PC-3 (cell line): ENCODE measurements at regions of chr20 and their contacts with region 1.

Region 1: GRCh38 chr20:45044084-45044573 is 56.8 kb downstream of the KCNS1 start:
- DNase-seq: peak; percentile 90
- ATAC-seq: peak; percentile 79
- H3K4me3 ChIP-seq: no peak overlapping the region
- H3K27ac ChIP-seq: no peak overlapping the region
- H3K4me1 ChIP-seq: peaks cover 26% of the 10 kb centered on the region
- H3K27me3 ChIP-seq: no peaks in the 10 kb centered on the region
- CTCF ChIP-seq: peak; percentile 97

Region 2: DNA sequence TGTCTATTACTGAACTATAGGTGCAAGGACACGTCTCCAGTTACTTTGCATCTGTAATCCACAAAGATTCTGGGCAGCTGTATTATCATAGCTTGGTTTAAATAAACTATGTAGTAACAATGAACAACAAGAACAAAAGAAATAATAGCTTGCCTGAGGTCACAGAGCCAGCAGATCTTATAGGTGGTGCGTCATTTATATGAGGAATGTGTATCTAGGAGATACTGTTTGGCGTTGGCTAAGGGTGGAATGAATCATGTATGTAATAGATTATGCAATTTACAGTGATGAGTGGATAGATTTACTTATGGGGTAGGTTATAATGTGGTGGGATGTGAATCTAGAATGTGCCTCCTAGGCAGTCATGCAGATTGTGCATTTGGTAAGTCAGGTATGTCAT is 645.8 kb before region 1 on chr20:
- CTCF ChIA-PET with region 1: no interaction called
- POLR2A ChIA-PET with region 1: no interaction called
- intact Hi-C with region 1: no loop called
- DNase-seq: peak; percentile 93
- ATAC-seq: peak; percentile 94
- H3K4me3 ChIP-seq: no peak overlapping the region
- H3K27ac ChIP-seq: peak overlapping the region; percentile 33
- H3K4me1 ChIP-seq: peaks cover 12% of the 10 kb centered on the region
- H3K27me3 ChIP-seq: no peaks in the 10 kb centered on the region
- CTCF ChIP-seq: no peak

Region 3: GRCh38 chr20:44960103-44960852 is 83.9 kb before region 1 on chr20 and contains the start of gene TOMM34:
- CTCF ChIA-PET with region 1: no interaction called
- POLR2A ChIA-PET with region 1: no interaction called
- intact Hi-C with region 1: no loop called
- DNase-seq: peak; percentile 97
- ATAC-seq: peak; percentile 83
- H3K4me3 ChIP-seq: peak within 1 kb of the TSS; percentile 79
- H3K27ac ChIP-seq: peak within 1 kb of the TSS; percentile 89
- H3K4me1 ChIP-seq: peaks cover 47% of the 10 kb centered on the region
- H3K27me3 ChIP-seq: no peaks in the 10 kb centered on the region
- CTCF ChIP-seq: no peak
- total RNA-seq, gene TOMM34: 103 and 120 TPM in 2 replicates

Region 4: GRCh38 chr20:45011108-45011526 is 33.0 kb before region 1 on chr20:
- CTCF ChIA-PET with region 1: interaction called, 16 read pairs
- POLR2A ChIA-PET with region 1: no interaction called
- intact Hi-C with region 1: loop called (anchors 2 kb)
- DNase-seq: peak; percentile 84
- ATAC-seq: peak; percentile 88
- H3K4me3 ChIP-seq: no peak overlapping the region
- H3K27ac ChIP-seq: peak overlapping the region; percentile 48
- H3K4me1 ChIP-seq: peaks cover 24% of the 10 kb centered on the region
- H3K27me3 ChIP-seq: no peaks in the 10 kb centered on the region
- CTCF ChIP-seq: peak; percentile 98

Region 5: DNA sequence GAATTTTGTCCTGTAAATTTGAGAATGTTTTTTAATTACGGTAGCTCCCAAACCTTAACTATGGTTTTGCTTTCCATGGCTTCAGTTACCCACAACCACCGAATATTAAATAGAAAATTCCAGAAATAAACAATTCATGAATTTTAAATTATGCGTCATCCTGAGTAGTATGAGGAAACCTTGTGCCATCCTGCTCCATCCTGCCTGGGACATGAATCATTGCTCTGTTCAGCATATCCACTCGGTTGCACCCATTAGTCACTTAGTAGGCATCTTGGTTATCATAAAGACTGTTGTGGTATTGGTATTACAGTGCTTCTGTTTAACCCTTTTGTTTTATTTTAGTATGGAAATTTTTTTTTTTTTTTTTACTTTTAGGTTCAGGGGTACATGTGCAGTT is 17.1 kb after region 1 on chr20:
- CTCF ChIA-PET with region 1: interaction called, 5 read pairs
- POLR2A ChIA-PET with region 1: interaction called, 4 read pairs
- intact Hi-C with region 1: loop called (anchors 2 kb)
- DNase-seq: peak; percentile 96
- ATAC-seq: peak; percentile 93
- H3K4me3 ChIP-seq: 0 out of 2 replicates have a peak overlapping the region, but pooled peaks have one; percentile 7
- H3K27ac ChIP-seq: peak overlapping the region; percentile 57
- H3K4me1 ChIP-seq: peaks cover 52% of the 10 kb centered on the region
- H3K27me3 ChIP-seq: no peaks in the 10 kb centered on the region
- CTCF ChIP-seq: no peak

Region 6: DNA sequence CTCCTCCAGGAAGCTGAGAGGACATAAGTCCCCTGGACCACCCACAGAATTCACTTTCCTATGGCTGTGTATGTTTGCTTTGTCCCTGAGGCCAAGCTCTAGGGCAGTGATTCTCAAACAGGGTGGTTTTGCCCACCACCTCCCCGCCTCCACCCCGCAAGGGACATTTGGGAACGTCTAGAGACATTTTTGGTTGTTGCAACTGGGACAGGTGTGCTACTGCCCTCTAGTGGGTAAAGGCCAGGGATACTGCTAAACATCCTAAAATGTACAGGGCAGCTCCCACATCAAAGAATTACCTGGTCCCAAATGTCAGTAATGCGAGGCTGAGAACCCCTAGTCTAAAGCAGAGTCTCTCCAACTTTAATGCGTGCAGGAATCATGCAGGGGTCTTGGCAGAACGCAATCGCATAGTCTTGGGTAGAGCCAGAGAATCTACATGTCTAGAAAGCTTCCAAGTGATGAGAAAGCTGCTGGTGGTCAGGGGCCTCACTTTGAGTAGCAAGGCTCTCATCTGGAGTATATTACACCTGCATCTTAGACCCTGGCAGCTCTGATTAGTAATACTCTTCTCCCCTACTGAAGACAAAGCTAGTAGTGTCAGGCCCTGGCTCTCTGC is 51.7 kb after region 1 on chr20:
- CTCF ChIA-PET with region 1: interaction called, 64 read pairs
- POLR2A ChIA-PET with region 1: no interaction called
- intact Hi-C with region 1: loop called (anchors 1 kb)
- DNase-seq: peak; percentile 89
- ATAC-seq: peak; percentile 89
- H3K4me3 ChIP-seq: no peak overlapping the region
- H3K27ac ChIP-seq: no peak overlapping the region
- H3K4me1 ChIP-seq: no peaks in the 10 kb centered on the region
- H3K27me3 ChIP-seq: no peaks in the 10 kb centered on the region
- CTCF ChIP-seq: peak; percentile 86

Region 7: DNA sequence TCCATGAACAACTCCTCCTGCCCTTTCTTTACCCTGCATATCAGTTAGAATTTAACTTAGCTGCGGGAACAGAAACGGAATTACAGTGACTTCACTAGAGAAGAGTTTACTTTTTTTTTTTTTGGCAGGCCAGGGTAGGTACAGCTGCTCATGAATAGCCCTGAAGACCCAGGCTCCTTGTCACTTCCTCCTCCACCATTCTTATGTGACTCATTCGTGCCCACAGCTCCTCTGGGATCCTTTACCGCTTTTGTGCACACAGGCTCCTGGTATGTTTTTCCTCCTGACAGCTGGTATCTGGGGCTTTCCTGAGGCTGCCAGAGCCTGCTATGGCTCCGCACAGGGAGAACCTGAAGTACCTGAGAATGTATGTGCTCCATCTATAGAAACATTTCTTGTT is 60.7 kb after region 1 on chr20:
- CTCF ChIA-PET with region 1: interaction called, 12 read pairs
- POLR2A ChIA-PET with region 1: no interaction called
- intact Hi-C with region 1: no loop called
- DNase-seq: peak; percentile 92
- ATAC-seq: peak; percentile 99
- H3K4me3 ChIP-seq: no peak overlapping the region
- H3K27ac ChIP-seq: peak overlapping the region; percentile 24
- H3K4me1 ChIP-seq: peaks cover 10% of the 10 kb centered on the region
- H3K27me3 ChIP-seq: no peaks in the 10 kb centered on the region
- CTCF ChIP-seq: no peak

Region 8: GRCh38 chr20:45229264-45230056 is 185.3 kb after region 1 on chr20:
- CTCF ChIA-PET with region 1: interaction called, 6 read pairs
- POLR2A ChIA-PET with region 1: no interaction called
- intact Hi-C with region 1: loop called (anchors 1 kb)
- DNase-seq: peak; percentile 91
- ATAC-seq: peak; percentile 83
- H3K4me3 ChIP-seq: peak overlapping the region; percentile 28; the same call in 1 of the 2 replicates
- H3K27ac ChIP-seq: no peak overlapping the region
- H3K4me1 ChIP-seq: 0 out of 2 replicates have a peak, but pooled peaks cover 5% of the 10 kb centered on the region
- H3K27me3 ChIP-seq: no peaks in the 10 kb centered on the region
- CTCF ChIP-seq: peak; percentile 97